Naive thymus-derived CD4-positive, alpha-beta T cell (primary cell): ENCODE measurements at regions of chr3 and their contacts with region 1.

Region 1: DNA sequence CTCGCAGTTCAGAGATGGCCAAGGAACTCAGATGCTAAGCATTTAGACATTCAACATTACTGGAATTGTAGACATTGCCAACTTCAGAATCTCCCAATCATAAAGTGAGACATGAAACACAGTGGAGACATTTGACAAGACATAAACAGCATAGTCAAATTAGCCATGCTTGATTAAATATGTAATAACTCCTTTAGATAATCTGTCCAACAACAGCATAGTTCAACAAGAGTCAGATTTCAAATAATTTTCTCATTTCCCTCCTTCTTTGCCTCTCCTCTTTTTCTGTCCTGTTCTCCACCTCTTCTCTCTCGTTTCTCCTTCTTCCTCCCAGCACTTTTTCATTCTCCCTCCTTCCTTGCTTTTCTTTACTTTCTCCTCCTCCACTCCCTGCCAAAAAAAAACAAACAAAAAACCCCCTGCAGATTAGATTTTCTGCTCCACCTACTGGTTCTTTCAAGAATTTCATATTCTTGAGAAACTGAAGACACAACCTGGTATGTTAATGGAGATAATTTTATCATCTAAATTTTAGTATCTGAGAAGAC is 20.2 kb downstream of the CPOX start:
- DNase-seq: peak in 1 of 9 donors; percentile 17
- ATAC-seq: peak; percentile 45
- H3K4me3 ChIP-seq: no peak overlapping the region
- H3K4me3 Mint-ChIP-seq: peak overlapping the region in 1 of 10 donors; percentile 59
- H3K27ac ChIP-seq: no peak overlapping the region
- H3K27ac Mint-ChIP-seq: peak overlapping the region in 5 of 9 donors; percentile 2 to 80 (median 65)
- H3K4me1 ChIP-seq: peaks cover 0 to 13% of the 10 kb centered on the region in 2 donors
- H3K4me1 Mint-ChIP-seq: peaks cover 4 to 58% (median 11%) of the 10 kb centered on the region in 7 donors
- H3K27me3 ChIP-seq: no peaks in the 10 kb centered on the region
- H3K27me3 Mint-ChIP-seq: no peaks in the 10 kb centered on the region

Region 2: DNA sequence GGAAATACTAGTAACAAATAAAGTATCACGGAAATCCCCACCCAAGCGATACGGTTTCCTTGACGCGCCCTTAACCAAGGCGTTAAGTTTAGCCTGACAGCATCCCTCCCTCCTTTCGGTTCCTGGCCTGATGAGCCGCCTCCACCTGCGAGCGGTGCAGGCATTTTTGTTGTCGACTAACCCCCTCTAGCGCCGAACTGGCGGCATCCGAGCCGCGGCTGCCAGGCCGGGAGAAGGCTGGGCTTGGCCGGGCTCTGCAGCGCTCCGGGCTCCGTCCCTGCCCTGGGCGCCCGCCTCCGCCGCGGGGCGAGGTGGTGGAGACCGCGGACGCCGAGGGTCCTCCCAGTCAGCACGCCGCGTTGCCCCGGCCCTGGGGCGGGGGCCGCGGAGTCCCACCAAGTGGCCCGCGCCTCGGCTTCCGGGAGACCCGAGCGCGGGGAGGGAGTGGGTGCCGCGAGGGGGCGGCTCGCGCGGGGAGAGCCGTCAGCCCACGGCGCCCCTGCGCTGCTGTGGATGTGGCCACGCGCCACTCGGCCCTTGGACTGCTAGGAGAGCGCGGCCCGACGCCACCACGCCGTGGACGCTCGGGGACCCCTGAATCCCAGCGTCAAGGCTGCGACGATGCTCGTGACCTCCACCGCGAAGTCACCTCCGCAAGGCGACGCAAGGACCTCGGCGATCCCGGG is 1760.0 kb before region 1 on chr3:
- CTCF ChIA-PET with region 1: no interaction called
- POLR2A ChIA-PET with region 1: no interaction called
- intact Hi-C with region 1: no loop called
- DNase-seq: peak in 6 of 9 donors; percentile 2 to 71 (median 12)
- ATAC-seq: peak; percentile 69
- H3K4me3 ChIP-seq: no peak overlapping the region
- H3K4me3 Mint-ChIP-seq: peak overlapping the region; percentile 13 to 78 (median 62)
- H3K27ac ChIP-seq: no peak overlapping the region
- H3K27ac Mint-ChIP-seq: no peak overlapping the region
- H3K4me1 ChIP-seq: peaks cover 0 to 3% of the 10 kb centered on the region in 2 donors
- H3K4me1 Mint-ChIP-seq: peaks cover 7 to 17% (median 10%) of the 10 kb centered on the region in 7 donors
- H3K27me3 ChIP-seq: peaks cover 0 to 6% of the 10 kb centered on the region in 2 donors
- H3K27me3 Mint-ChIP-seq: peaks cover 22 to 44% (median 32%) of the 10 kb centered on the region in 5 donors

Region 3: DNA sequence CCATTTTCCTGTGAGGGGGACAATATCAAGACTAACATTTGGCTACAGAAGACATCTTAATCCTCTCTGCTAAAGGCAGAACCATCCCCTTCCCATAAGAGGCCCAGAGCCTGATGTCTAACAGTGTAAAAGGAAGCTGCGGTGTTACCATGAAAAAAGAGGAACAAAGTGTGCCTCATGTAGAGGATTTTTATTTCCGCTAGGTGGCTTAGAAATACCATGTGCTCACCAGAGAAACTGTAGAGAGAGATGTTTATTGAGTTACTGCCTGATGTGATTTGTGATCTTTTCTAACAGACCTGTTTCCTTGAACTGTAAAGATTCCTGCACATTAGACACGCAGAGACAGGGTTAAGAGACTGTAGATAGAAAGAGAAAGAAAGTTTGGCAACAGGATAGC is 384.7 kb before region 1 on chr3:
- CTCF ChIA-PET with region 1: no interaction called
- POLR2A ChIA-PET with region 1: no interaction called
- intact Hi-C with region 1: loop called in 1 of 2 experiments (anchors 2 kb)
- DNase-seq: peak in 3 of 9 donors; percentile 1 to 10 (median 3)
- ATAC-seq: peak; percentile 66
- H3K4me3 ChIP-seq: no peak overlapping the region
- H3K4me3 Mint-ChIP-seq: no peak overlapping the region
- H3K27ac ChIP-seq: no peak overlapping the region
- H3K27ac Mint-ChIP-seq: no peak overlapping the region
- H3K4me1 ChIP-seq: no peaks in the 10 kb centered on the region
- H3K4me1 Mint-ChIP-seq: peaks cover 0 to 5% (median 1%) of the 10 kb centered on the region in 7 donors
- H3K27me3 ChIP-seq: no peaks in the 10 kb centered on the region
- H3K27me3 Mint-ChIP-seq: peaks cover 8 to 19% (median 12%) of the 10 kb centered on the region in 5 donors

Region 4: GRCh38 chr3:98329392-98330124 is 243.7 kb before region 1 on chr3:
- CTCF ChIA-PET with region 1: no interaction called
- POLR2A ChIA-PET with region 1: no interaction called
- intact Hi-C with region 1: loop called (anchors 1 to 5 kb)
- DNase-seq: peak in 8 of 9 donors; percentile 9 to 48 (median 34)
- ATAC-seq: peak; percentile 83
- H3K4me3 ChIP-seq: no peak overlapping the region
- H3K4me3 Mint-ChIP-seq: no peak overlapping the region
- H3K27ac ChIP-seq: no peak overlapping the region
- H3K27ac Mint-ChIP-seq: peak overlapping the region in 1 of 9 donors; percentile 8
- H3K4me1 ChIP-seq: no peaks in the 10 kb centered on the region
- H3K4me1 Mint-ChIP-seq: peaks cover 0 to 25% (median 0%) of the 10 kb centered on the region in 7 donors
- H3K27me3 ChIP-seq: no peaks in the 10 kb centered on the region
- H3K27me3 Mint-ChIP-seq: peaks cover 16 to 66% (median 32%) of the 10 kb centered on the region in 5 donors

Region 5: DNA sequence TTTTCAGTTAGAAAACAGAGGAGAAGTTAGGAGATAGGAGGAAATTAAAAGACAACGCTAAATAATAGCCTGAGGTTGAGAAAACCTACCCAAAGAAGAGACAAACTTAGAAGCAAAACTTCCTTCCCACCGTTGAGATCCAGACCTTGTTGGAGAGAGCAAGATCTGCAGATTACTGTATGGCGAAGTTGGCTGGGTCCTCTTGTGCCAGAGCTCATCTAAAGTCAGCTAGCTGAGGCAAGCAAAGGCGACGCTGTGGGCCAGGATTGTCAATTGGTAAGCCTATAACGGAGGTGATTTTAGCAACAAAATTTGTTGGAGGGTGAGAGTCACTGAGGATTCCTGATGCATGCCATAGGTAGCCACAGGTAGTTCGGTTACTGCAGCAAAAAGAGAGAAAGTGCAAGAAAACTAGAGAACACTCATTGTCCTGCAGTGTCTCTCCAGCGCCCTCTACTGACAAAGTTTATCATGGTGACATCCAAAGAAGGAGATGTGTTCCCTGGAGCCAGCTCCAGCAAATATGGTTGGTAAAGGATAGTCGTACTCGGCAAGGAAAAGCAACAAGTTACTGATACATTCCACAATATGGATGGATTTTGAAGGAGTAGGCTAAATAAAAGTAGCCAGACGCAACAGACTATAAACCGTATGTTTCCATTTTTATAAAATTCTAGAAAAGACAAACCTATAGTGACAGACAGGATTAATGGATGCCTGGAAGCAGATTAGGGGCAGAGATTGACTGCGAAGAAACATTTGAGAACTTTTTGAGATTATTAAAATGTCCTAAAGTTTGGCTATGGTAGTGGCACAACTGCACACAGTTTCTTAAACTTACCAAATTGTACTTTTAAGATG is 229.4 kb before region 1 on chr3:
- CTCF ChIA-PET with region 1: no interaction called
- POLR2A ChIA-PET with region 1: no interaction called
- intact Hi-C with region 1: loop called in 1 of 2 experiments (anchors 5 kb)
- DNase-seq: peak in 4 of 9 donors; percentile 7 to 25 (median 18)
- ATAC-seq: no peak
- H3K4me3 ChIP-seq: no peak overlapping the region
- H3K4me3 Mint-ChIP-seq: no peak overlapping the region
- H3K27ac ChIP-seq: no peak overlapping the region
- H3K27ac Mint-ChIP-seq: no peak overlapping the region
- H3K4me1 ChIP-seq: no peaks in the 10 kb centered on the region
- H3K4me1 Mint-ChIP-seq: peaks cover 0 to 10% (median 0%) of the 10 kb centered on the region in 7 donors
- H3K27me3 ChIP-seq: no peaks in the 10 kb centered on the region
- H3K27me3 Mint-ChIP-seq: peaks cover 3 to 60% (median 6%) of the 10 kb centered on the region in 5 donors

Region 6: GRCh38 chr3:98359993-98360675 is 213.1 kb before region 1 on chr3:
- CTCF ChIA-PET with region 1: no interaction called
- POLR2A ChIA-PET with region 1: no interaction called
- intact Hi-C with region 1: loop called in 1 of 2 experiments (anchors 1 kb)
- DNase-seq: no peak
- ATAC-seq: no peak
- H3K4me3 ChIP-seq: no peak overlapping the region
- H3K4me3 Mint-ChIP-seq: no peak overlapping the region
- H3K27ac ChIP-seq: no peak overlapping the region
- H3K27ac Mint-ChIP-seq: no peak overlapping the region
- H3K4me1 ChIP-seq: no peaks in the 10 kb centered on the region
- H3K4me1 Mint-ChIP-seq: peaks cover 0 to 8% (median 0%) of the 10 kb centered on the region in 7 donors
- H3K27me3 ChIP-seq: no peaks in the 10 kb centered on the region
- H3K27me3 Mint-ChIP-seq: peaks cover 0 to 13% (median 4%) of the 10 kb centered on the region in 5 donors

Region 7: DNA sequence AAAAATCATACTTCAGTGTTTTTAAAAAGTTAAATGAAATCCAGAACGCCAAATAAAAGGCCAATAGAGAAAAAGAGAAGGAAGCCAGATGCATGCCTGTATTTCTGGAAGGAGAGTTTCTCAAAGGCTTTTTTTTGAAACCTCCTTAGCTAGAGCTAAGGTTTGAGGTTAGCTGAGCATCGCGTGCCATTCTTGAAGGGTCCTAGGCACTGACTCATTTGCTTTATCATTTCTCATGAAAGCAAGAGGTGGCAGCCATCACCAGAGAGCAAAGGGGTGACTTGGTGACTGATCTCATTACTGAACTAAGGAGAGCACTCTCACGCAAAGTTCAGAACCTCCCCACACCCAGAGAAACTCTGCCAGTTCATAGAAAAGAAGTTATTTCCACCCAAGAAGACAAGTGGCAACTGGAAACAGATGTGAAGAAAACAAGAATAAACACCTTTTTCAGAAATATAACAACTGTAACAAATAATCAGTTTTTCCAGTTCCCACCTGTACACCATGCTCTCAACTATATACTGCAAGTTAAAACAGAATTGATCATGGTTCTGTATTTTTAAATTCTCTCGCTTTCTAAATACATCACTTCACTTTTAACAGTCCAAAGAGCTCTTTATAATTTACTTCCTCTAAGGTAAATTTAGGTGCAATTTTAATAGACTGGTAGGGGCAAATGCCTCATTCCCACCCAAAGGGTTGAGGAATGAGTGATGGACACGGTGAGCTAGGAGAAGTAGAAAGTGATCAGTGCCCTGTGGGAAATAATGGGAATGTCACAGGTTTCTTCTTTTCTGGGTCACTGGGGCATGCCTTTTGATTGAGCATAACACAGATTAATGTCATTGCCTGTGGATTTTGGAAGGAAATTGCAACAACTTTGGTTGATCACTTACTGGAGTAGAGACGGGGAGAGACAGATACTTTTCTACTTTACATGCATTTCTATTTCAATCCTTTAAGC is 16.8 kb before region 1 on chr3:
- CTCF ChIA-PET with region 1: interaction called, 3 read pairs
- POLR2A ChIA-PET with region 1: no interaction called
- intact Hi-C with region 1: loop called (anchors 1 kb)
- DNase-seq: peak in 2 of 9 donors; percentile 19 to 58
- ATAC-seq: peak; percentile 77
- H3K4me3 ChIP-seq: no peak overlapping the region
- H3K4me3 Mint-ChIP-seq: peak overlapping the region in 3 of 10 donors; percentile 9 to 83 (median 30)
- H3K27ac ChIP-seq: no peak overlapping the region
- H3K27ac Mint-ChIP-seq: peak overlapping the region in 5 of 9 donors; percentile 5 to 98 (median 40)
- H3K4me1 ChIP-seq: peaks cover 0 to 56% of the 10 kb centered on the region in 2 donors
- H3K4me1 Mint-ChIP-seq: peaks cover 6 to 84% (median 23%) of the 10 kb centered on the region in 7 donors
- H3K27me3 ChIP-seq: no peaks in the 10 kb centered on the region
- H3K27me3 Mint-ChIP-seq: peaks cover 0 to 5% (median 0%) of the 10 kb centered on the region in 5 donors

Region 8: GRCh38 chr3:98584552-98584951 is 11.3 kb after region 1 on chr3:
- CTCF ChIA-PET with region 1: no interaction called
- POLR2A ChIA-PET with region 1: no interaction called
- intact Hi-C with region 1: no loop called
- DNase-seq: no peak
- ATAC-seq: no peak
- H3K4me3 ChIP-seq: no peak overlapping the region
- H3K4me3 Mint-ChIP-seq: no peak overlapping the region
- H3K27ac ChIP-seq: no peak overlapping the region
- H3K27ac Mint-ChIP-seq: no peak overlapping the region
- H3K4me1 ChIP-seq: no peaks in the 10 kb centered on the region
- H3K4me1 Mint-ChIP-seq: peaks cover 3 to 63% (median 15%) of the 10 kb centered on the region in 7 donors
- H3K27me3 ChIP-seq: no peaks in the 10 kb centered on the region
- H3K27me3 Mint-ChIP-seq: no peaks in the 10 kb centered on the region